Right ventricle myocardium inferior (tissue), 1 donor: ENCODE measurements at regions of chr15 and their contacts with region 1.

Region 1: DNA sequence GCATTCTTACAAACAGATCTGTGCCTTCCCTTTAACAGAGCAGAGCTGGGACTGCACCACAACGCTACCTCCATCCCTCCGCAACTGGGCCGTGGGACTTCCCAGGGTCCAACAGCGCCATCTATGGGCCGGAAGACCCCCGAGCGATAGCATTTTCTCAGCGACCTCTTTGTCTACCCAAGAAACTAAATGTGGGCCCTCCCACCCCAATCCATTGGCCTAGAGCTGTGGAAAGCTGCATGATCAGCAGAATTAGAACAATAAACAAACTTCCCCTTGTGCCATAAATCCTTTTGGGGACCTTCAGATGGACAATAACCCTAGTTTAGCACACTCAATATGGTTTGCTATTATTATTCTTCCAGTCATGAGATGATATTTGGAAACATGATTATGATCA is 74.7 kb upstream of the NTRK3 start:
- DNase-seq: no peak
- ATAC-seq: no peak

Region 2: DNA sequence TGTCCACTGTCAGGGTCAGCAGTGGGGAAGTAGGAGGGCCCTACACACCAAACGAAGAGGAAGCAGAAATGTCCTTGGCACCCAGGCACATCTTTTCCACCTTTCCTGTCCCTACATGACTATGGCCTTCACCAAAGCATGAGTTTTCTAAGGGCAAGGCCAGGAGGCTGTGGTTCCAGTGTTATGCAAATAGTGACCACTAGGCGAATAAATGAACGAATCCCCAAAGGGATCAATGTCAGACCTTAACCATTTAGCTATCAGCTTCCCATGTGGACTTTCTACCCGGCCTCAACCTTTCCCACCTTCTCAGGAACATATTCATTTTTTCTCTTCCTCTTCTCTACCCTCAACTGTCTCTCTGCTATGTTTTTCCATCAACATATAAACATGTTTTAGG is 137.9 kb before region 1 on chr15:
- intact Hi-C with region 1: no loop called
- DNase-seq: no peak
- ATAC-seq: no peak

Region 3: GRCh38 chr15:88447206-88447605 is 115.9 kb after region 1 on chr15:
- intact Hi-C with region 1: loop called (anchors 5 kb)
- DNase-seq: no peak
- ATAC-seq: no peak